ENCODE measurements at regions of chr6 and their contacts with region 1.

Region 1: DNA sequence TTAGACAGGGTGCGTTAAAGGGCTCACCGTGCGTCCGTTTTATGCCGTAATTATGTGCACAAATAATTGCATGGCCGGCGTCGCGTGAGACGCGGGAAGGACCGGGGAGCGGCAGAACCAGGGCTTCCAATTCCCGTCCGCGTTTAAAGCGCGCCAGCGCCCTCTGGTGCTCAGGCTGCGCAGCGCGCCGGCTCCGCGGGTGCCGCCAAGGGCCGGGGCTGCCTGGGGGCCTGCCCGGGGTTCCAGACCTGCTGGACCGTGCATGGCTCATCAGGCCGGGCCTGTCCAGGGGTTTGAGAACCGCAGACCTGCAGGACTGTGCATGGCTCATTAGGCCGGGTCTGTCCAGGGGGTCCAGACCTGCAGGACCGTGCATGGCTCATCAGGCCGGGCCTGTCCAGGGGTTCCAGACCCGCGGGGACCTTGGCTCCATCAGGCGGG is 369.0 kb downstream of the THBS2 start:
- DNase-seq: peak; percentile 58 to 95 (median 76)
- ATAC-seq: peak; percentile 87
- H3K4me3 ChIP-seq: peak overlapping the region; percentile 41 to 70
- H3K4me3 Mint-ChIP-seq: peak overlapping the region; percentile 89
- H3K27ac ChIP-seq: peak overlapping the region; percentile 62 to 68
- H3K27ac Mint-ChIP-seq: peak overlapping the region; percentile 77
- H3K4me1 ChIP-seq: peaks cover 12% of the 10 kb centered on the region
- H3K4me1 Mint-ChIP-seq: peaks cover 9% of the 10 kb centered on the region
- H3K27me3 ChIP-seq: no peaks in the 10 kb centered on the region
- H3K27me3 Mint-ChIP-seq: no peaks in the 10 kb centered on the region
- CTCF ChIP-seq: peak; percentile 92

Region 2: DNA sequence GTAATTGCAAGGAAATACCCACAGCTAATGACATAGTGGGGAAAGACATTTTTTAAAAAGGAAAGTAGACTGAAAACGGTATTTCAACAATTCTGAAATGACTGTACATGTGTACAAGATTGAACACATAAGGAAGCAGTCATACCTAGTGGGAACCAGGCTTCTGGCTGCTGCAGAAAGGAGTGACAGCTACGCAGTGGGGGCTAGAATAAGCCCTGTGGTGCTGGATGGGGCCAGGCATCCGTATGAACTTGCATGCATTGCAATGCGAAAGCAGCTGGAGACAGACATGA is 1672.0 kb before region 1 on chr6:
- CTCF ChIA-PET with region 1: no interaction called
- POLR2A ChIA-PET with region 1: no interaction called
- intact Hi-C with region 1: loop called in 1 of 2 experiments (anchors 10 kb)
- DNase-seq: no peak
- ATAC-seq: no peak
- H3K4me3 ChIP-seq: no peak overlapping the region
- H3K4me3 Mint-ChIP-seq: no peak overlapping the region
- H3K27ac ChIP-seq: no peak overlapping the region
- H3K27ac Mint-ChIP-seq: no peak overlapping the region
- H3K4me1 ChIP-seq: no peaks in the 10 kb centered on the region
- H3K4me1 Mint-ChIP-seq: no peaks in the 10 kb centered on the region
- H3K27me3 ChIP-seq: no peaks in the 10 kb centered on the region
- H3K27me3 Mint-ChIP-seq: peaks cover 5% of the 10 kb centered on the region
- CTCF ChIP-seq: no peak

Region 3: GRCh38 chr6:167907837-167908681 is 976.6 kb before region 1 on chr6:
- CTCF ChIA-PET with region 1: no interaction called
- POLR2A ChIA-PET with region 1: no interaction called
- intact Hi-C with region 1: loop called (anchors 5 to 10 kb)
- DNase-seq: no peak
- ATAC-seq: no peak
- H3K4me3 ChIP-seq: no peak overlapping the region
- H3K4me3 Mint-ChIP-seq: no peak overlapping the region
- H3K27ac ChIP-seq: no peak overlapping the region
- H3K27ac Mint-ChIP-seq: no peak overlapping the region
- H3K4me1 ChIP-seq: no peaks in the 10 kb centered on the region
- H3K4me1 Mint-ChIP-seq: no peaks in the 10 kb centered on the region
- H3K27me3 ChIP-seq: no peaks in the 10 kb centered on the region
- H3K27me3 Mint-ChIP-seq: peaks cover 2% of the 10 kb centered on the region
- CTCF ChIP-seq: no peak

Region 4: DNA sequence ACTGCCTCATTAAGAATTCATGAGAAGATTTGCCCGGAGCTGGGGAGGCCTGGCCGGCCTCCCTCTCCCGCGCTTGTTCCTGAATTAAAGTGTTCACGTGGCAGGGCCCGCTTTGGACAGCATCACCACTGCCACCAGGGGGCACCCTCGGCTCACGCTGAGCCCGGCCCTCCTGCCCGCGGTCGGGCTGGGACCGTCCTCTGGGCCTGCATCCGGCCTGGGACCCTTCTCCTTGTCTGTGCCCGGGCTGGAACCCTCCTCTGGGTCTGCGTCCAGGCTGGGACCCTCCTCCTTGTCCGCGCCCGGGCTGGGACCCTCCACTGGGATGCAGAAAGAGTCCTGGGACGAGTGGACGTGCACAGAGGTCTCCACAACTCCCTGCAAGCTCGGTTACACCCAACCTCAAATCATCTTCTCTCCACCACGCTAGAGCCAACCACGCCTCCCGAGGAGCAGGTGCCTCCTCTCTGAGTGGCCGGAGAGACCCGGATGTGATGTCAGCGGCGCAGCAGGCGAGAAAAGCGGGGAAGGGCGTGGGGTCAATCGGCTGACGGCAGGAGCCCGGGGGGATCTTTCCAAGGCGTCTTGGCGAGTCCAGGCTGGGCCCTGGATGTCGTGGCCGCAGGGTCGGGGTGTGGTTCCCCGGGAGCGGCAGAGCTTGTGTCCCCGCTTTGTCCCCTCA is 514.2 kb before region 1 on chr6:
- CTCF ChIA-PET with region 1: interaction called, 3 read pairs
- POLR2A ChIA-PET with region 1: no interaction called
- intact Hi-C with region 1: loop called in 1 of 2 experiments (anchors 1 kb)
- DNase-seq: peak; percentile 19 to 85 (median 50)
- ATAC-seq: no peak
- H3K4me3 ChIP-seq: no peak overlapping the region
- H3K4me3 Mint-ChIP-seq: no peak overlapping the region
- H3K27ac ChIP-seq: no peak overlapping the region
- H3K27ac Mint-ChIP-seq: no peak overlapping the region
- H3K4me1 ChIP-seq: no peaks in the 10 kb centered on the region
- H3K4me1 Mint-ChIP-seq: peaks cover 3% of the 10 kb centered on the region
- H3K27me3 ChIP-seq: no peaks in the 10 kb centered on the region
- H3K27me3 Mint-ChIP-seq: peaks cover 8% of the 10 kb centered on the region
- CTCF ChIP-seq: peak; percentile 53

Region 5: DNA sequence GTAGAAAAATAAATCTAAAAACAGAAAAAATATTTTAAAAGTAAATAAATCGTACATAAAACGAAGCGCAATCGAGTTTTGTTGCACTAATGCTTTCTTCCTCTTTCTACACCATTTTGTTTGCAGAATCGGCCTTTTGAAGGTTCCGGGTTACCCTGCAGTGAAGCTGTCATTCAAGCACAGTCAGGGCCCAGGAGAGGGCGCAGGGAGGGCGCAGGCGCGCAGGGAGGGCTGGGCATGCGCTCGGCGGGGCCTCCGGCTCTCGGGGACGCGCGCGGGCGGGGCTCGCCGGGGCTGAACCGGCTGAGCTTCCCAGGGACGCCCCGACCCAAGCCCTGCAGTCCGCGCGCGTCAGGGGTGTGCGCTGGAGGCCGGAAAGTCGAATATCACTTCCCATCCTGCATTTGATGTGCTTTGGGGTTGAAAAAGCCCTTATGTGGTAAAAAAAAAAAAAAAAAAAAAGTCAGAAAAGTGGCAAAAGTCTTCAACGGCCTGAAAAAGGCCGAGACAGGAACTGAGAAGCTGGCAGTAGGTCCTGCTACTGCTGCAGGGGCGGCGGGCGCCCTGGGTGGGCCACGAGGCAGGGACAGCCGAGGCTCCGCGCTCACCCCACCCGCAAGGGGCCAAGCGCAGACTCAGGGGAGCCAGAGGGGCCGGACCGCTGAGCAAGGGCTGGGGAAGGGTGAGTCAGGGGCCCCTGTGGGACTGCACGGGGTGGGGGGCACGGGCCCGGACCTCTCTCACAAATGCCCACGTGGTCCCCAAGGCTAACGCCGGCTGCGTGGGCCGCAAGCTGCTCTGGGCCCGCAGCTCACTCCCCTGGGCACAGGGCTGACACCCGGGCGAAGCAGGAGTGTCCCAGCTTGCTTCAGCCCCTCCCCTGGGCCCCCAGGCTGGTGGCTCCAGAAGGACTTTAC is 328.5 kb after region 1 on chr6:
- CTCF ChIA-PET with region 1: no interaction called
- POLR2A ChIA-PET with region 1: no interaction called
- intact Hi-C with region 1: loop called in 1 of 2 experiments (anchors 5 kb)
- DNase-seq: peak; percentile 80 to 95 (median 86)
- ATAC-seq: peak; percentile 99
- H3K4me3 ChIP-seq: peak overlapping the region; percentile 20 to 23
- H3K4me3 Mint-ChIP-seq: peak overlapping the region; percentile 72
- H3K27ac ChIP-seq: peak overlapping the region in 1 of 2 experiments; percentile 66
- H3K27ac Mint-ChIP-seq: peak overlapping the region; percentile 78
- H3K4me1 ChIP-seq: peaks cover 7% of the 10 kb centered on the region
- H3K4me1 Mint-ChIP-seq: peaks cover 9% of the 10 kb centered on the region
- H3K27me3 ChIP-seq: no peaks in the 10 kb centered on the region
- H3K27me3 Mint-ChIP-seq: no peaks in the 10 kb centered on the region
- CTCF ChIP-seq: no peak

Measured in CD8-positive, alpha-beta T cell (primary cell).